Uterus (tissue), 4 donors: ENCODE measurements at regions of chr16 and their contacts with region 1.

Region 1: GRCh38 chr16:88785106-88785924 is at the start of gene PIEZO1:
- DNase-seq: peak; percentile 76 to 80
- H3K4me3 ChIP-seq: peak within 1 kb of the TSS; percentile 44 to 97
- H3K27ac ChIP-seq: peak within 1 kb of the TSS; percentile 82 to 97
- H3K4me1 ChIP-seq: no peaks in the 10 kb centered on the region
- H3K27me3 ChIP-seq: no peaks in the 10 kb centered on the region
- CTCF ChIP-seq: peak; percentile 81 to 98 (median 96)
- POLR2A ChIP-seq: peak; percentile 27 to 62
- total RNA-seq, gene PIEZO1: 62.3 to 161 (median 123) TPM

Region 2: GRCh38 chr16:88274847-88275246 is 510.5 kb before region 1 on chr16:
- intact Hi-C with region 1: no loop called
- DNase-seq: peak in 1 of 2 donors; percentile 39
- H3K4me3 ChIP-seq: no peak overlapping the region
- H3K27ac ChIP-seq: peak overlapping the region; percentile 55 to 59
- H3K4me1 ChIP-seq: no peaks in the 10 kb centered on the region
- H3K27me3 ChIP-seq: no peaks in the 10 kb centered on the region
- CTCF ChIP-seq: no peak
- POLR2A ChIP-seq: no peak

Region 3: DNA sequence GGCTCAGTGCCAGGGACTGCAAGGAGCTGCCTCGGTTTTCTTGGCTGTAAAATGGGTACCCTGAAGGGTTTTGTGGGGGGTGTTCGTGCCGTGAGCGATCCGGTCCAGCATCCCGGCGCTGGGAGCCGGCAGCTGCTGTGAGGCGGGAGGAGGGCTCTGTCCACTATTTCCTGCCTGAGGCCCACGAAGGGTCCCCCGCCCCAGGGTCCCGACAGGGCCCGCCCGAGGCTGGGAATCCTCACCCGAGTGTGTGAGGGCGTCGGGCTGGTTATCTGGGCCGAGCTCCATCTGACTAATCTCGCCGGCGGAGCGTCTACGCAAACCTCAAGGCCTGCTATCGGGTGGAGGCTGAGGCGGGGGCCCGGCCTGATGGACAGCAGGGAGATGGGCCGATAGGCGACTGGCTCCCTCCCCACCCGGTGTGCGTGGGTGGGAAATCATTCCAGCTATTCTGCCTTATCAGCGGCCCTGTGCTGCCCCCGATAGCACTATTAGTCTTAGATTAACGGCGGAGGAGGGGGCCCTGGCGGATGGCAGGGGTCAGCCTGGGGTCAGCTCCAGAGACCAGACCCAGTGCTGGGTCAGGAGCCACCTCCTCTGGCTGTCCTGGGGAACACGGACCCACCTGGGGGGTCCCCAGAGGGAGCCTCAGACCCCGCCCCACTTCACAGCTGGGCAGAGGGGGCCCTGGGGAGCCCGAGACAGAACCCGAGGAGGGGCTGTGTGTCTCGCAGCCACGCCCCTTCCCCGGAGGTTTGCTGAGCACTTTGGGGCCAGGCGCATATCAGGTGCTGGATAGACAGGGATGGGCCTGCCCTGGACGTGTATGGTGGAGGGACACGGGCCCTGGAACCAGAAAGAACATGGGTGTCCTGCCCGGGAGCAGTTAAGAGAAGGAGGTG is 287.5 kb before region 1 on chr16:
- intact Hi-C with region 1: no loop called
- DNase-seq: no peak
- H3K4me3 ChIP-seq: no peak overlapping the region
- H3K27ac ChIP-seq: no peak overlapping the region
- H3K4me1 ChIP-seq: no peaks in the 10 kb centered on the region
- H3K27me3 ChIP-seq: no peaks in the 10 kb centered on the region
- CTCF ChIP-seq: no peak
- POLR2A ChIP-seq: no peak

Region 4: DNA sequence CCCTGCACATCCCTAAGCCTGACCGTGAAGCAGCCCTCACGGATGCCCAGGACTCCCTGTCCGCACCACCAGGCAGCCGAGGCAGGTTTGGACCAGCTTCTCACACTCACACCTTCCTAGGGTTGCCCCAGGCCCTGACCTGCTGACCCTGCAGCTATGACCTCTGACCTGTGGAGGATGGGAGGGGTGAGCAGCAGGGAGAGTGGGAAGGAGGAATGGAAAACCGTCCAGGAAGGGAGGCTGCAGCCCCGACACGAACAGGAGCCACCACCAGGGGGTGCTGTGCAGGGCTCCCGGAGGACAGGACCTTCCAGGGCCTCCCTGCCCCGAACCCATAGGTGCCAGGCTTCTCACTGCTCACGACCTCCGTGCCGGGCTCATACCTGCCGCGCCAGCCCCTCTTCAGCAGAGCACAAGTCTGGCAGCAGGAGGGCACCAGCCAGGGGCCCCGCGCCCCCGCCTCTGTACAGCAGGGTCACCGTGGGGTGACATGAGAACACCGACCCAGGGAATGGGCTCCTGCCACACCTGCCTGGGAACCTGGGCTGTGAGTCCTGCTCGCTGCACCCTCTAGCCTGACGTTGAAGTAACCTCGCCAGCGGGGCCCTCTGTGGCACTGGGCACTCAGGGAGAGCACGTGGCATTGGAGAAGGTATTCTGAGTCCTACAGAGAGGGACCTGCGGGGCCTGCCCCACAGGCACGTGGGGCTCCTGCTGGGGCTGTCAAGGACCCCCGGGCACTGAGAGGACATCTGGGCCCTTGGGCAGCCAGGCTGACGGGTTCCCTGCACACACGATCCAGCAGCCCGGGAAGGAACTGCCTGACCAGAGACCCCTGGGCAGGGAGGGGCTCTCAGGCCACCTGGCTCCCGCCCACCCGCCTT is 41.4 kb before region 1 on chr16:
- intact Hi-C with region 1: loop called (anchors 5 kb)
- DNase-seq: peak; percentile 77 to 78
- H3K4me3 ChIP-seq: no peak overlapping the region
- H3K27ac ChIP-seq: peak overlapping the region; percentile 27 to 41
- H3K4me1 ChIP-seq: peaks cover 6 to 19% of the 10 kb centered on the region in 2 donors
- H3K27me3 ChIP-seq: no peaks in the 10 kb centered on the region
- CTCF ChIP-seq: peak; percentile 76 to 85 (median 81)
- POLR2A ChIP-seq: peak in 1 of 2 donors; percentile 17